Posterior vena cava (tissue), 2 donors: ENCODE measurements at regions of chr2 and their contacts with region 1.

Region 1: DNA sequence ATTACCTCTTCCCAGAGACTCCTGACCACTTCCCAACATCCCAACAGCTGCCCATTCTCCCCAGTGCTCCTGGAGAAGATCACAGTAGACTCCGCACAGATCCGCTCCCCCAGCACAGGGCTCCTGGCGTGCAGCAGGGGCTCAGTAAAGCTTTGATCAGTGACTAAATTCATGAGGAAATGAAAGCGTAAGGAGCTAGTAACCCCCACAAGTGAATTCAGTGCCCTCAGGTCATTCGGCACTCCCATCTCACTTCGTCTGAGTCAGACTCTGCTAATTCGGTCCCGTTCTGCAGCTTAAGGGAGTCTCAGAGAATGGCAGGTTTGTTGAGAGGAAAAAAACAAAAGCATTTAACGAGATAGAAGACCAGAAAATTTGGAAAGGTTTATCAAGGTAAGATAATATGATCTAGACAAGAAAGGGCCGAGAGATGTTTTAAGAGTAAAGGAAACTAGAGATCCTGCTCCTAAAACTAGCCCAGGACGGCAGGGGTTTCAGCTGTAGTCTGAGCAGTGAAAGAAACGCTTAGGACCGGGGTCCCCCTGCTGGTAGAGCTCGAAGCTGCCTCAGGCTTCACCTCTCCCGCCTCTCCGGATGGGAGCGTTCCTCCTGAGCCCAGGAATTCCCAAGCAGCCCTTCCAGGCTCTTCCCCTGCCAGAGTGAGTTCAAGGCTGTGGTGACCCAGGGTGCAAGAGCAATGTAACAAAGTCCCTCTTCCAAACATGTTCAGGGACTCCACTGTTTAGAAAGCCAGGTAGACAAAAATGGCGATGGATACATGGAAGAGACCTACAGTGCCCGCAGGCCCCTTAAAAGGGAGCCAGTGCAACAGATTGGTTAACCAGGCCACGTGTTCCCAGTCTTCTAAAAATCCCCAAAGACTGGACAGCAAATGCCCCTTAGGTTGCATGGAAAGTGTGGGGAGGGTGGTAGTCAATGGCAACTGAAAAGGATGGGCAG is 127.3 kb downstream of the DNER start:
- DNase-seq: peak; percentile 94

Region 2: DNA sequence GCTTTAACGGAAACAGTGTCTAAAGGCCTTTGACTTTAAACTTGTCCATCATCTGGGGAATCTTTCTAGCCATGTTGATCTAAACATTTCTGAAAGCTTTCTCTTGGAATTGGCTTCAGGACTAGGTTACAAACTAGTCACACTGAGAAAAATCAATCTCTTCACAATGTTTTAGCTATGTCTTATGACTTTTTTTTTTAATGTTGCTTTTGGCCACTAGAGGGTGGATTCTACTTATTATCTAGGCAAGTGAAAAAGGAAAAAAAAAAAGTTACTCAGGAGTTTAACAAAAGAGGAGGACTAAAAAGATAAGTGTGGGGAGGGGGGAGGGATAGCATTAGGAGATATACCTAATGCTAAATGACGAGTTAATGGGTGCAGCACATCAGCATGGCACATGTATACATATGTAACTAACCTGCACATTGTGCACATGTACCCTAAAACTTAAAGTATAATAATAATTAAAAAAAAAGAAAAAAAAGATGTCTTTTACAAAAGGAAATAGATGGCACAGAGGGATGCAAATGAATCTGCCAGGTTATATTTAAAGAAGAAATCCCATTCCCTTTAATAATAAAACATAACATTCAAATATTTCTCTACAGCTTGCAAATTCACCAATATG is 155.6 kb before region 1 on chr2:
- intact Hi-C with region 1: loop called (anchors 2 to 5 kb)
- DNase-seq: no peak

Region 3: GRCh38 chr2:229634601-229635370 is 47.8 kb after region 1 on chr2:
- intact Hi-C with region 1: no loop called
- DNase-seq: no peak